ENCODE measurements at regions of chr10 and their contacts with region 1.

Region 1: GRCh38 chr10:68720793-68721672 is at the start of gene CCAR1:
- DNase-seq: peak; percentile 98
- H3K4me3 ChIP-seq: peak within 1 kb of the TSS; percentile 87 to 99 (median 88)
- H3K27ac ChIP-seq: peak within 1 kb of the TSS; percentile 86 to 97 (median 94)
- H3K4me1 ChIP-seq: peaks cover 0 to 12% (median 10%) of the 10 kb centered on the region in 4 donors
- H3K27me3 ChIP-seq: no peaks in the 10 kb centered on the region
- CTCF ChIP-seq: no peak
- EP300 ChIP-seq: no peak
- POLR2A ChIP-seq: peak; percentile 77
- total RNA-seq, gene CCAR1: 42.0 to 99.9 (median 56.0) TPM

Region 2: GRCh38 chr10:68171539-68172080 is 549.4 kb before region 1 on chr10:
- in situ Hi-C with region 1: no loop called
- intact Hi-C with region 1: no loop called
- DNase-seq: no peak
- H3K4me3 ChIP-seq: no peak overlapping the region
- H3K27ac ChIP-seq: no peak overlapping the region
- H3K4me1 ChIP-seq: peaks cover 0 to 12% (median 1%) of the 10 kb centered on the region in 4 donors
- H3K27me3 ChIP-seq: no peaks in the 10 kb centered on the region
- CTCF ChIP-seq: no peak
- EP300 ChIP-seq: no peak
- POLR2A ChIP-seq: no peak

Region 3: DNA sequence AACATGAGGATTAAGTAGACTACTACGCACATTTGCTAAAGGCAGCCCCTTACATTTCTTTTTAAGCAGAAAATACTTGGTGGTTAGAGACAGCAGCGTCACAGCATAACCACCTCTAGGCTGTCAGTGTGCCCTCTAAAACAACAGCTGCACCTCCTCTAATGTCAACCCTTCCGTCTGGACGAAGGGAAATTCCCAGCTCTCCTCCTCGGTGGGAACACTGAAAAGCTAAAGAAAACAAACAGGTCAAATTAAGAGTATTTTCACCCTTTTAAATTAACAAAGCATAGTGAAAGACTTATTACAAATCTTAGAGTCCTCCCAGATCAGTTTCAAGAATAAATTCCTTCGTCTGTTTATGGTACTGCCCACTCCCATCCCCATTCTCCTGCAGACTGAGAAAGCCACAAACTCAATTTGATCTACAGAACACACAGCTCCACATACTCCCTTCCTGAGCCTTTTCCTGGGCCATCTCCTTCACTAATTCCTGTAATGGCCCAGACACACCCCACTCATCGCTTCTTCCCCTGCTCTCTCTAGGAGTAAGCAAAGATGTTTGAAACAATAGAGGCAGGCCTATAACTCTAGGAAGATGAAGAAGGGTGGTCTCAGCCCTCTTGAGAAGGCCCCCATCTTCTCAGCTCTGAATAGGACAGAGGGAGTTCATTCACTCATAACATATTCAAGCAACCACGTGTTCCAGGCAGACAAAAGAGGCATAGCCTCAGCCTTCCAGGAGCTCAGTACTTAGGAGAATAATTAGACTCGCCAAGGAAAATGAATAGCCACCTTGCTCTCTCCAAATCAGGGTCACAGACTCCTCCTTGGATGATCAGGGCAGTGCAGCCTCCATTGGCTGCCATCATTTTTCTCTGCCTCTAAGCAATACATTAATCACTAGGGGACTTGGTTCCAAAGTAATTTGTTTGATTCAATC is 436.7 kb before region 1 on chr10:
- in situ Hi-C with region 1: no loop called
- intact Hi-C with region 1: no loop called
- DNase-seq: no peak
- H3K4me3 ChIP-seq: no peak overlapping the region
- H3K27ac ChIP-seq: no peak overlapping the region
- H3K4me1 ChIP-seq: no peaks in the 10 kb centered on the region
- H3K27me3 ChIP-seq: no peaks in the 10 kb centered on the region
- CTCF ChIP-seq: no peak
- EP300 ChIP-seq: no peak
- POLR2A ChIP-seq: no peak

Region 4: DNA sequence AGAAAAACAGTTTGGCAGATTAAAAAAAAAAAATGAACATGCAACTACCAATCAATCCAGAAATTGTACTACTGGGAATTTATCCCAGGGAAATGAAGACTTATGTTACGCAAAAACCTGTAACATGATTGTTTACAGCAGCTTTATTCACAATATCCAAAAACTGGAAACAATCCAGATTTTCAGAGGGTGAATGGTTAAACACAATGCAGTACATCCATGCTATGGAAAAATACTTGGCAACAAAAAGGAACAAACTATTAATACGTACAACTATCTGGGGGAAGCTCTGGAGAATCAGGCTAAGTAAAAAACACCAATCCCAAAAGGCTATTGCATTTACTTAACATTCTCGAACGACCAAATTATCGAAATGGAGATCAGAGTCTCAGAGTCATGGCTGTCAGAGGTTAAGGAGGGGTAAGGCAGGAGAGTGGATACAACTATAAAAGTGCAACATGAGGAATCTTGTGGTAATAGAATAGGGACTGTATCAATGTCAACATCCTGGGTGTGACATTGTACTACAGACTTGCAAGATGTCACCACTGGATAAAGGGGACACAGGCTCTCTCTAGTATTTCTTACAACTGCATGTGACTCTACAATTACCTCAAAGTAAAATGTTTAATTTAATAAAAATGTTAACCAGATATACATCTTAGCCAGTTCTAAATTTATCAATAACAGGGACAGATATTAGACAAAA is 292.5 kb before region 1 on chr10:
- in situ Hi-C with region 1: no loop called
- intact Hi-C with region 1: no loop called
- DNase-seq: no peak
- H3K4me3 ChIP-seq: no peak overlapping the region
- H3K27ac ChIP-seq: no peak overlapping the region
- H3K4me1 ChIP-seq: no peaks in the 10 kb centered on the region
- H3K27me3 ChIP-seq: no peaks in the 10 kb centered on the region
- CTCF ChIP-seq: no peak
- EP300 ChIP-seq: no peak
- POLR2A ChIP-seq: no peak

Region 5: GRCh38 chr10:68526626-68527307 is 194.3 kb before region 1 on chr10:
- in situ Hi-C with region 1: loop called in 2 of 4 experiments (anchors 25 kb)
- intact Hi-C with region 1: no loop called
- DNase-seq: no peak
- H3K4me3 ChIP-seq: peak overlapping the region; percentile 96 to 99 (median 98)
- H3K27ac ChIP-seq: peak overlapping the region; percentile 96 to 99 (median 97)
- H3K4me1 ChIP-seq: peaks cover 0 to 13% (median 5%) of the 10 kb centered on the region in 4 donors
- H3K27me3 ChIP-seq: no peaks in the 10 kb centered on the region
- CTCF ChIP-seq: no peak
- EP300 ChIP-seq: no peak
- POLR2A ChIP-seq: no peak

Region 6: DNA sequence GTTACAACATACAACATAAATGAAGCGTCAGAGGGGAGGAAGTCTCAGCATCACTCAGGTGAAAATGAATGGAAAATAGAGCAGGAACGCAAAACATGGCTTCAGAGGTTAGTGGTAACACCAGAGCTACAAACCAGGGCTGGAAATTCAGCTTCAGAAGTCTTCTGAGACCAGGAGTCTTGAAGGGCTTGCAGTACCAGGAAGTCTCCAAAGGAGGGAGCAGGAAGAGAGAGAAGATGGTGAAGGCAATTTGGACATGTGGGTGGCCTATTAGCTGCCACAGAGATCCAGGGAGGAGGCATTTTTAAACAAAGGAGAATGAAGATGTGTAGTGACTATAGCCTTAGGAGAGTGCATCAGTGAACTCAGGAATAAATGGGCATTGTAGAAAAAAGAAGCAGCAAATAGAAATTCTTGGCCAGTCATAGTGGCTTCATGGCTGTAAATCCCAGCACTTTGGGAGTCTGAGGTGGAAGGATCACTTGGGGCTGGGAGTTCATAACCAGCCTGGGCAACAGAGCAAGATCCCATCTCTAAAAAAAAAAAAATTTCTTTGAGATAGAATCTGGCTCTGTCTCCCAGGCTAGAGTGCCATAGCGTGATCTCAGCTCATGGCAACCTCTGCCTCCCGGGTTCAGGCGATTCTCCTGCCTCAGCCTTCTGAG is 170.2 kb before region 1 on chr10:
- in situ Hi-C with region 1: loop called in 3 of 4 experiments (anchors 25 kb)
- intact Hi-C with region 1: no loop called
- DNase-seq: peak; percentile 60
- H3K4me3 ChIP-seq: no peak overlapping the region
- H3K27ac ChIP-seq: no peak overlapping the region
- H3K4me1 ChIP-seq: no peaks in the 10 kb centered on the region
- H3K27me3 ChIP-seq: no peaks in the 10 kb centered on the region
- CTCF ChIP-seq: peak; percentile 69 to 77 (median 76)
- EP300 ChIP-seq: no peak
- POLR2A ChIP-seq: no peak

Region 7: GRCh38 chr10:68566955-68567354 is 154.1 kb before region 1 on chr10:
- in situ Hi-C with region 1: loop called in 1 of 4 experiments (anchors 25 kb)
- intact Hi-C with region 1: loop called (anchors 2 kb)
- DNase-seq: no peak
- H3K4me3 ChIP-seq: no peak overlapping the region
- H3K27ac ChIP-seq: no peak overlapping the region
- H3K4me1 ChIP-seq: peaks cover 0 to 9% (median under 1%) of the 10 kb centered on the region in 4 donors
- H3K27me3 ChIP-seq: peaks cover 20% of the 10 kb centered on the region
- CTCF ChIP-seq: no peak
- EP300 ChIP-seq: no peak
- POLR2A ChIP-seq: no peak

Measured in transverse colon (tissue), 4 donors.